K562 (cell line): ENCODE measurements at regions of chr1 and their contacts with region 1.

Region 1: DNA sequence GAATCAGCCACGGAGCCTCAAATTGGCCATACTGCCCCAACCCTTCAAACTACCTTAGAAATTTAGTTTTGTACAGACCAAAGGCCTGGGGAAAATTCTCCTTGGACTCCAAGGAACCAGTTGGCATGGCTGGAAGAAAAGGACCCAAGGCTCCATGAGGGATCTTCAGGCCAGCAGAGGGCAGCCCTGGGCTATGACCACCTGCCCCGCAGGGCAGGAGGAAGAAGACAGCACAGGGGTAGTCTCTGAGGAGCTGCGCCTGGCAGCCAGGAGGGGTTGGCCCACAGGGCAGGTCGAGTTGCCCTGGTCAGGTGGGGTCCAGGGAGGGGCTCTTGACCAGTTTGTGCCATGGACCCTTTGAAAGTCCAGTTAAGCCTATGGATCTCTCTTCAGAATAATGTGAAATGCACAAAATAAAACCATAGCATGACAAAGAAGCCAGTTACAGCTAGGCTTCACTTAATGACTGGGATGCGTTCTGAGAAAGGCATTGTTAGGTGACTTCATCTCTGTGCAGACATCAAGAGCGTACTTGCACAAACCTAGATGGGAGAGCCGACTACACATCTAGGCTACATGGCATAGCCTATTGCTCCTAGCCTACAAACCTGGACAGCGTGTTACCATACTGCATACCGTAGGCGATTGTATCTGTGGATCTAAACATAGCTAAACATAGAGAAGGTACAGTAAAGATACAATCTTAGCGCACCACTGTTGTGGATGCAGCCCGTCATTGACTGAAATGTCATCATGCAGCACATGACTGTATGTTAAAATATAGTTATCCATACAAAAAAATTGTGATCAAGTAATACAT is 26.1 kb downstream of the CACNA1S start:
- DNase-seq: peak; percentile 68 to 81 (median 72)
- ATAC-seq: peak; percentile 97
- H3K4me3 ChIP-seq: no peak overlapping the region
- H3K27ac ChIP-seq: no peak overlapping the region
- H3K4me1 ChIP-seq: no peaks in the 10 kb centered on the region
- H3K27me3 ChIP-seq: peaks cover 44 to 64% of the 10 kb centered on the region in 2 experiments
- CTCF ChIP-seq: peak; percentile 82 to 91 (median 84)
- EP300 ChIP-seq: no peak
- POLR2A ChIP-seq: no peak
- RAD21 ChIP-seq: peak; percentile 74 to 88

Region 2: GRCh38 chr1:201114236-201115131 is 28.4 kb after region 1 on chr1:
- CTCF ChIA-PET with region 1: interaction called, 11 read pairs
- POLR2A ChIA-PET with region 1: interaction called, 5 read pairs
- in situ Hi-C with region 1: no loop called
- intact Hi-C with region 1: loop called (anchors 1 kb)
- DNase-seq: peak; percentile 83 to 85 (median 84)
- ATAC-seq: peak; percentile 98
- H3K4me3 ChIP-seq: no peak overlapping the region
- H3K27ac ChIP-seq: no peak overlapping the region
- H3K4me1 ChIP-seq: peaks cover 0 to 7% of the 10 kb centered on the region in 2 experiments; a peak in 2 of 5 replicates
- H3K27me3 ChIP-seq: peaks cover 20 to 51% of the 10 kb centered on the region in 2 experiments; a peak in 4 of 5 replicates
- CTCF ChIP-seq: peak; percentile 85 to 91 (median 90)
- EP300 ChIP-seq: no peak
- POLR2A ChIP-seq: no peak
- RAD21 ChIP-seq: peak; percentile 82 to 93

Region 3: GRCh38 chr1:201184307-201185122 is 98.4 kb after region 1 on chr1:
- CTCF ChIA-PET with region 1: no interaction called
- POLR2A ChIA-PET with region 1: no interaction called
- in situ Hi-C with region 1: no loop called
- intact Hi-C with region 1: loop called (anchors 10 kb)
- DNase-seq: peak; percentile 33 to 61 (median 44)
- ATAC-seq: peak; percentile 98
- H3K4me3 ChIP-seq: no peak overlapping the region
- H3K27ac ChIP-seq: no peak overlapping the region
- H3K4me1 ChIP-seq: peaks cover 0 to 3% of the 10 kb centered on the region in 2 experiments; a peak in 1 of 5 replicates
- H3K27me3 ChIP-seq: peaks cover 35 to 69% of the 10 kb centered on the region in 2 experiments
- CTCF ChIP-seq: peak; percentile 78 to 91 (median 79)
- EP300 ChIP-seq: no peak
- POLR2A ChIP-seq: no peak
- RAD21 ChIP-seq: peak; percentile 61 to 82

Region 4: GRCh38 chr1:201224666-201225370 is 138.7 kb after region 1 on chr1:
- CTCF ChIA-PET with region 1: interaction called, 6 read pairs
- POLR2A ChIA-PET with region 1: no interaction called
- in situ Hi-C with region 1: no loop called
- intact Hi-C with region 1: loop called (anchors 2 kb)
- DNase-seq: no peak
- ATAC-seq: no peak
- H3K4me3 ChIP-seq: no peak overlapping the region
- H3K27ac ChIP-seq: no peak overlapping the region
- H3K4me1 ChIP-seq: peaks cover 0 to 7% of the 10 kb centered on the region in 2 experiments; a peak in 1 of 5 replicates
- H3K27me3 ChIP-seq: peaks cover 46 to 67% of the 10 kb centered on the region in 2 experiments
- CTCF ChIP-seq: no peak
- EP300 ChIP-seq: no peak
- POLR2A ChIP-seq: no peak
- RAD21 ChIP-seq: no peak

Region 5: DNA sequence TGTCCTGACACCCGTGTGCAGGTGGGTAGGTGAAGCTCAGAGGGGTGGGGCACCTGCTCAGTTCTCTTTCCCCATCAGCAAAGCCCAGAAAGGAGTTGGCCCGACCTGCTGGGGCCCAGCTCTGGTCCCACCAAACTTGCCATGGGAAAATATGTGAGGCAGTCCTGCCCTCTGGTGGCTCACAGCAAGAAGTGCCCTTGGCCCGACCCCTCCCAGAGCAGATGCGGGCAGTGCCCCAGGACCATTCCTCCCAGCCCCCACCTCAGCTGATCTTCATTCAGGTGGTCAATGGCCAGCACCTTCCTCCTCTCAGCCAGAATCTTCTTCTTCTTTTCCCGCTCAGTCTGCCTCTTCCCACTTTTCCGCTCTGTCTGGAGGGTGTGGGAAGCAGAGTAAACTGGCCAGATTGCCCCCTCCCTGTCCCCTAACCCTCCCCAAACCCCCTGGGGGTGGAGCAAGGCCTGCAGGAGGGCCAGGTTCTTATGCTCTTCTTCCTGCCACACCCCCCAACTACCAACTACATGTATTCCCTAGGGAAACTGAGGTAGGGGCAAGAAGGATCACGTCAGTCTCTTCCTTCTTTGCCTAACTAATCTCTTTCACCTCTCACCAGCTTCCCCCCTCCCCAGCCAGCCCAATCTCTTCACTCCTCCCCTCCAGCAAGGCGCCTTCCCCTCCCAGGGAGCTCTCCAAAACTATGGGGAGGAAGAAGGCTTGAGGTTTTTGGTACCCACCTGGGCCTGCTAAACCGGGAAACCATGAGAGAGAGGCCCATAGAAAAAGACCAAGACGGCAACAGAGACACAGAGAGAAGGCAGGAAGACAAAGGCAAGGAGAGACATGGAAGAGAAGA is 275.8 kb after region 1 on chr1:
- CTCF ChIA-PET with region 1: no interaction called
- POLR2A ChIA-PET with region 1: no interaction called
- in situ Hi-C with region 1: no loop called
- intact Hi-C with region 1: loop called (anchors 5 kb)
- DNase-seq: peak; percentile 66 to 86 (median 84)
- ATAC-seq: peak; percentile 93
- H3K4me3 ChIP-seq: no peak overlapping the region
- H3K27ac ChIP-seq: no peak overlapping the region
- H3K4me1 ChIP-seq: peaks cover 0 to 3% of the 10 kb centered on the region in 2 experiments; a peak in 1 of 5 replicates
- H3K27me3 ChIP-seq: peaks cover 0 to 80% of the 10 kb centered on the region in 2 experiments; a peak in 2 of 5 replicates
- CTCF ChIP-seq: peak; percentile 86 to 91 (median 89)
- EP300 ChIP-seq: no peak
- POLR2A ChIP-seq: no peak
- RAD21 ChIP-seq: peak; percentile 87 to 92